CD4-positive, alpha-beta memory T cell (primary cell): ENCODE measurements at regions of chr2 and their contacts with region 1.

Region 1: DNA sequence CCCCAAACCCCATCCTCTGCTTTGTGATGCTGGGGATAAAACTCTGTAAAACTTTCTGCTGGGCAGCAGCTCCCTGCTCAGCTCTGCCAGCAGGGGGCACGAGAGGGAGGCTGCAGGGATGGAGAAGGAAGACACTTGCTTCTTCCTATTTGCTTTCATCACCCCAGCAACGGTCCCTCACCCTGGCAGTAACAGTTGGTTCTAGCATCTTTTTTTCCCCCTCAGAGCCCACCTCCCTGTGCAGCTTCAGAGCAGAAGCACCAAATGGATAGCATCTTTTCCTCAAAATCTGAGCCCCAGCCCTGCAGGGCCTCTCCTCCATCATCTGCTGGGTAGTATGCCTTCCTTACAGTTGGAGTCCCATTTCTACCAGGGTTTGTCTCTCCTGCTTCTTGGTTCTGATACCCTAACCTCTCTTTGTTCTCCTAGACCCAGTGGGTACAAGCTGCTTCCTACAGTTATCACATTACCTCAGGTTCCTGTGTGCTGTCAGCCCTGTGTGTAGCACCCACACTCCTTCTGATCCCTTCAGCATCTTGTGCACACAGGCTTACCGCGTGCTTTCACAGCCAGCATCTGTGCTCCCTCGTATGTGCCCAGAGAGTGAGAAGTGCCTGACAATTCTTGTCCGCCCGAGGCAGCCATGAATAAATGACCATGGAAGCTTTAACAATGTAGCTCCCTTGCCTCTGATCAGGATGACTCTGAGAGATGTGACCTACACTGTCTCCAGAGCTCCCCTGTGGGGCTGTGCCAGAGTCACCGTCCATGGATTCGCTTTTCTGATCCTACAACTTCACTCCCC is 14.5 kb downstream of the CKAP2L start:
- DNase-seq: peak; percentile 74 to 79 (median 77)
- H3K4me3 ChIP-seq: peak overlapping the region in 1 of 2 donors; percentile 23
- H3K4me3 Mint-ChIP-seq: peak overlapping the region; percentile 53 to 84 (median 68)
- H3K27ac ChIP-seq: peak overlapping the region; percentile 22
- H3K27ac Mint-ChIP-seq: peak overlapping the region; percentile 32 to 89 (median 82)
- H3K4me1 ChIP-seq: peaks cover 9% of the 10 kb centered on the region
- H3K4me1 Mint-ChIP-seq: peaks cover 8 to 32% (median 17%) of the 10 kb centered on the region in 4 donors
- H3K27me3 ChIP-seq: no peaks in the 10 kb centered on the region
- H3K27me3 Mint-ChIP-seq: no peaks in the 10 kb centered on the region

Region 2: DNA sequence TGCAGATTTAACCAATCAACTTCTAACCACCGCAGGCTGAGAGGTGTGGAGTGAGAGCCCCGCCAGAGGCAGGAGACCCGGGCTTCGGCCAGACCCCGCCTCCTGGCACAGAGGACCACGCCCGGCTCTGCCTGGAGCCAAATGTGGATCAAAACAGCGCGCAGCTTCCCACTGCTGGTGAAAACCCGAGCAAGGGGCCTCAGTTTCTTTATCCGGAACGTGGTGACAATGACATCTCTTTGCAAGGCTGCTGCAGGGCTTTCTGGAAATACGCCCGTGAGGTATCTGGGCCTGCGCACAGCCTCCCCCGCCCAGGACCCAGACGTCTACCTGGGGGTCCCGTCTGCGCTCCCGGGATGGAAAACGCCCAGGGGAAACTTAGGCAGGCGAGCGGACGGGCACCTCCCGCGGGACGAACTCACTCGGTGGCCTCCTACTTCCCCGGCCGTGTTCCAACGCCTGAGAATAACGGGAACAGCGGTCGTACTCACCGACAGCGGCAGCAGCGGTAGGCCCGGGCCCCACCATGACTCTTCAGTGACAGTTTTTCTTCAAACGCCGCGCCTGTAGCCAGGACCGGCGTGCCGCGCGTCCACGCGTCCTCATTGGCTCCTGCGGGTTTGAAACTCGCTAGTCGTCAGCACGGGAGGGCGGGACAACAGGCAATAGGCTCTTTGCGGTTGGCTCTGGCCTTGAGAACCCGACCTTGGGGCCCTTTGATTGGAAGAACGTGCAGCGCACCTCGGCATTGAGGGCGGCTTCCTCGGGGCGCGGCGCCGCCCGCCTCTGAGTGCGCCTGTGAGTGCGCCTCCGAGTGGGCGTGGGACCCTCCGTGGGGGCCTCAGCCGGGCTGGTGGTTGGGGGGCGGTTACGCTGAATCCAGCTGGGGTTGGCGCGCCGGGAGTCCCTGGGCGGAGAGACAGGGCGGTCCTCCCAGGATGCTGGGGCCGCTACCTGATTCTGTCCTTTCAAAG is 14.4 kb after region 1 on chr2 and contains the start of gene CKAP2L:
- CTCF ChIA-PET with region 1: interaction called, 49 read pairs
- POLR2A ChIA-PET with region 1: interaction called, 6 read pairs
- intact Hi-C with region 1: no loop called
- DNase-seq: peak; percentile 94 to 98 (median 96)
- H3K4me3 ChIP-seq: peak within 1 kb of the TSS; percentile 39 to 85
- H3K4me3 Mint-ChIP-seq: peak within 1 kb of the TSS; percentile 91 to 98 (median 95)
- H3K27ac ChIP-seq: peak within 1 kb of the TSS; percentile 60
- H3K27ac Mint-ChIP-seq: peak within 1 kb of the TSS; percentile 76 to 96 (median 92)
- H3K4me1 ChIP-seq: peaks cover 29% of the 10 kb centered on the region
- H3K4me1 Mint-ChIP-seq: peaks cover 21 to 49% (median 35%) of the 10 kb centered on the region in 4 donors
- H3K27me3 ChIP-seq: no peaks in the 10 kb centered on the region
- H3K27me3 Mint-ChIP-seq: no peaks in the 10 kb centered on the region
- total RNA-seq, gene CKAP2L: 0.06 TPM in 1 of 2 experiments, not detected in the other

Region 3: DNA sequence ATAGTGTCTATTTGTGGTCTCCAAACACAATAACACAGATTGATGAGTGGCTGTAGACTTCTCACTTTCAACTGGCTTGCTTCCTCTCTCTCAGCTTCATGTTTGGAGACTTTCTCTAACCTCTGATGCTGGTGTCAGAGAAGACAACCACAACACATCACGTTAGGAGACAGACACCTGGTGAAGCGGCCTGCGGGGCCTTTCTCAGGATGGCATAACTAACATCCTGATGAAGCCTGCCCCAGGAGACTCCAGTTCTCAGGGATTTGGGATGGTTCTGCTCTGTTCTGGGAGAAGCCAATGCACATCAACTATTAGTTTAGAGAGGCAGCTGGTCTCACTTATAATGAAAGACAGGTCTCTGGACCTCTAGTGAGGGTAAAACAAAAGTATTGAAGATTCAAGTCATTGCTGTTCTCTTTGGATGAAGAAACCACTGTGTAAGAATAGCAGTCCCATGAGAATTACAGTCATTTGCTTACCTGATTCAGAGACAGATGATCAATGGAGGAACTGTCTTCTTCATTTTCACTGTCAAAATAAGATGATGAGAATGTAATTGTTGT is 32.4 kb after region 1 on chr2:
- CTCF ChIA-PET with region 1: interaction called, 13 read pairs
- POLR2A ChIA-PET with region 1: no interaction called
- intact Hi-C with region 1: no loop called
- DNase-seq: no peak
- H3K4me3 ChIP-seq: no peak overlapping the region
- H3K4me3 Mint-ChIP-seq: no peak overlapping the region
- H3K27ac ChIP-seq: no peak overlapping the region
- H3K27ac Mint-ChIP-seq: no peak overlapping the region
- H3K4me1 ChIP-seq: peaks cover 2% of the 10 kb centered on the region
- H3K4me1 Mint-ChIP-seq: peaks cover 6 to 9% (median 6%) of the 10 kb centered on the region in 4 donors
- H3K27me3 ChIP-seq: no peaks in the 10 kb centered on the region
- H3K27me3 Mint-ChIP-seq: peaks cover 3 to 7% of the 10 kb centered on the region in 2 donors

Region 4: DNA sequence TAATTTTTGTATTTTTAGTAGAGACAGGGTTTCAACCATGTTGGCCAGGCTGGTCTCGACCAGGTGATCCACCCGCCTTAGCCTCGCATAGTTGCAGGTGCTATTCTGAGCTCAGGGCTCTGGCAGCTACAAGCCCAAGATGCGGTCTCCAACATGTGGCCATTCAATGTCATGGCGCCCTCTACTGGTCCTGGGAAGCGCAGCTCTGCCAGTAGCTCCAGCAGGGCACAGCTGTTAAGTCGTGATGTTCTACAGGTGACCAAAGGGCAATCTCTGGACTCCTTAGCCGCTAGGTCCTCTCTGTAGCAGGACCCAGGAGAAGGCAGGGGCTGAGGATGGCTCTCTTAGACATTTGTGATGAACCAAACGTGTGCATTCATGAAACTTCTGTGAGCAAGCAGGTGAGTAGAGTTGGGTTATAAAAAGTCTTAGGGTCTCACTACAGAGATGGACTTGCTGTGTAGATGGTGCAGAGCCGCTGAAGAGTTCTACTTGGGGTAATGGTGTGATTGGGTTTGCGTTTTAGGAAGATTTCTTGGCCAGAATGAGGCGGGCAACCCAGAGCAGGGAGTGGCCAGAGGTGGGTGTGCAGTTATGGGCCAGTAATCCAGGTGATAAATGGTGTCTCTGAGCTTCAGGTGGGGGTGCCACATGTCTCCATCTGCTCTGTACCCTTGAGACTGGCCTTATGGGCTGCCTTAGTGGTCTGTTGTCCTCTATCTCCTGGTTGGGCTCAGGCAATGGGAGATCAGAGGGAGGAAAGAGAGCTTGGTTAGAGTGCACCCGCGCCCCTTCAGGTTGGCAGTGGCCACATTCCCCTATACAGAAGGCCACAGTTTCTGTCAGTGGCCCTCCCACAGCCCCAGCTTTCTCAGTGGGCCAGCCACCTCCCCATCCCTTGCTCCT is 192.0 kb after region 1 on chr2:
- CTCF ChIA-PET with region 1: interaction called, 90 read pairs
- POLR2A ChIA-PET with region 1: interaction called, 3 read pairs
- intact Hi-C with region 1: loop called (anchors 1 kb)
- DNase-seq: peak; percentile 28 to 48 (median 41)
- H3K4me3 ChIP-seq: no peak overlapping the region
- H3K4me3 Mint-ChIP-seq: no peak overlapping the region
- H3K27ac ChIP-seq: no peak overlapping the region
- H3K27ac Mint-ChIP-seq: no peak overlapping the region
- H3K4me1 ChIP-seq: no peaks in the 10 kb centered on the region
- H3K4me1 Mint-ChIP-seq: peaks cover 0 to 5% (median 0%) of the 10 kb centered on the region in 4 donors
- H3K27me3 ChIP-seq: no peaks in the 10 kb centered on the region
- H3K27me3 Mint-ChIP-seq: peaks cover 1 to 4% of the 10 kb centered on the region in 2 donors